ENCODE measurements at regions of chrX and their contacts with region 1.

Region 1: GRCh38 chrX:47129157-47129898 is 15.2 kb downstream of the NDUFB11 start:
- DNase-seq: peak; percentile 93 to 97
- ATAC-seq: peak; percentile 99
- H3K4me3 ChIP-seq: peak overlapping the region; percentile 56
- H3K27ac ChIP-seq: peak overlapping the region; percentile 67 to 84
- H3K4me1 ChIP-seq: no peaks in the 10 kb centered on the region
- CTCF ChIP-seq: no peak
- EP300 ChIP-seq: no peak
- POLR2A ChIP-seq: peak; percentile 72
- RAD21 ChIP-seq: no peak

Region 2: DNA sequence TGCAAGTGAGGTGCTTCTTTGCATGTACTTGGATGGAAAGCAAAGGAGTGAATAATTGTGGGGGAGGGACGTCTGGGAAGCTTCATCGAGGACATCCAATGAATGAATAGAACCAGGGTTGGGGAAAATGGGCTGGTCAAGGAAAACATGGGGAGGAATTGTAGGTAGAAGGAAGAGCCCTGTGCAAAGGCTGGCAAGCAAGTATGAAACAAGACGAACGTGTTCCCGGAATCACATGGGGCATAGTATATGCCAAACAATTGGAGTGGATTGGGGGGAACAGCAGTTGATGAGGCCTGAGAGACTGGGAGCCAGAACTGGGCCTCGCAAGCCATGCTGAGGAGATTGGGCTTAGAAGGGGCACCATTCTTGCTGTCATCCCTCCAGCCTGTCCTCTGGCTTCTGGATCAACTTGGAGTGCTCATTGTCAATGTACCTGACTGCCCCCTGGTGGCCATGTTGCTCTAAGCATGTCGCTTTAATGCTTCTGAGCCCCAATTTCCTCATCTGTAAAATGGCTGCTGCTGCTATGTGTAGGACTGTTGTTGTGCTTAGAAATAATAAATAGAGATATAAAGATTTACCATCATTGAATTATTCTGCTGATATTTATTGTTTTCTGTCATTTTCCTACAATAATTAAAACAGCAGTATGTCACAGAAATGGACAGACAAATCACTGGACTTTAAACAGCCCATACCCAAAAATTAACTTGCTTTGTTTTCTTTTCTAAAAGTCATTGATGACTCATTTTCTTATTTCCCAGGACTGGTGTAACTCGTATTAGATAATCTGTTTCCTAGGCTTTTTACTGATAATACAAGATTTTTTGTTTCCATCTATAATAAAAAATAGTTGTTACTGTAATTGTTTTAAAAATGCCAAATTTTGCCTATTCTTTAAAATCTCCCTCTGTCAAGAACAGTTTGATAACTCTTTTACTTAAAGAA is 150.7 kb before region 1 on chrX:
- CTCF ChIA-PET with region 1: no interaction called
- POLR2A ChIA-PET with region 1: no interaction called
- DNase-seq: peak; percentile 51 to 89
- ATAC-seq: peak; percentile 90 to 95
- H3K4me3 ChIP-seq: 0 out of 3 replicates have a peak overlapping the region, but pooled peaks have one; percentile 21
- H3K27ac ChIP-seq: peak overlapping the region; percentile 81 to 86
- H3K4me1 ChIP-seq: peaks cover 24% of the 10 kb centered on the region
- CTCF ChIP-seq: peak; percentile 65
- EP300 ChIP-seq: no peak
- POLR2A ChIP-seq: no peak
- RAD21 ChIP-seq: peak; percentile 63 to 69

Region 3: DNA sequence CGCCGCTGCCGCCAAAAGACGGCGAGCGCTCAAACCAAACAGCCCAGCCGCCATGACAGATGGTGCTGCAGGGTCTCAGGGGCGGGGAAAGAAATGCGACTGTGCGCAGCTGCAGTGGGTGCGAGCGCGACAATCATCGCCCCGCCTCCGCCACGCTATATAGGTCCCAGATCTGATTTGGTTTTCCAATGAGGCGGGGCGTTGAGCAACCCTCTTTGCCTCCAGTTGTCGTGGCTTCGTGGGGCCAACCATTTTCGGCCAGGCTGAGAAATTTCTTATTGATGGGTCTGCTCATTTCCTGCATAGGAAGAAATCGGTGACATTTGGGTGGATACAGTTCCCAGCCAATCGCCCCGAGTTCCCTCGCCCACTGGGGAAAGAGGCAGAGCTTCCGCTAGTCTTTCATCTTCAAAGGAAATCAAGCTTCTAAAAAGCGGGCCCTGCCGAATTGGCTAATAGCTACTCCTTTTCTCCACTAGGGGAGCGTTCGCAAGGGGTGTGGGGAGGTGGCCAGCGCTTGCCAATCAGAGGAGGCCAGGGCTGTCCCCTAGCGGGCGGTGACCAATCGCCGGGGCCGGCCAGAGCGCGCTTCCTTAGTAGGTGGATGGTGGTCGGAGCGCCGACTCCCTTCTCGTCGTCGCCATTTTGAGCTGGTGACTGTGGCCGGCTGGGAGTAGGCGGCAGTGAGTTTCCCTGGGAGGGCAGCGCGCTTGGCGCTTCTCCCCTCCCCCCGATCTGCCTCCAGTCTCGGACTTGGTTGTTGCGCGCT is 15.5 kb after region 1 on chrX and contains the starts of genes NDUFB11 and RBM10:
- CTCF ChIA-PET with region 1: interaction called, 10 read pairs
- POLR2A ChIA-PET with region 1: interaction called, 17 read pairs
- DNase-seq: peak; percentile 86 to 97
- ATAC-seq: peak; percentile 97 to 99
- H3K4me3 ChIP-seq: peak within 1 kb of the TSS; percentile 79
- H3K27ac ChIP-seq: peak within 1 kb of the TSS; percentile 90 to 97
- H3K4me1 ChIP-seq: peaks cover 17% of the 10 kb centered on the region
- CTCF ChIP-seq: peak; percentile 43
- EP300 ChIP-seq: no peak
- POLR2A ChIP-seq: peak; percentile 81
- RAD21 ChIP-seq: no peak
- polyA plus RNA-seq, gene NDUFB11: 84.5 and 101 TPM in 2 replicates
- polyA plus RNA-seq, gene RBM10: 16.4 and 21.1 TPM in 2 replicates